ENCODE measurements at regions of chr11 and their contacts with region 1.

Region 1: GRCh38 chr11:60265373-60266214 is 14.9 kb upstream of the MS4A4A start:
- DNase-seq: peak; percentile 23
- CTCF ChIP-seq: peak; percentile 71

Region 2: GRCh38 chr11:60145677-60146076 is 119.9 kb before region 1 on chr11:
- in situ Hi-C with region 1: no loop called
- DNase-seq: no peak
- CTCF ChIP-seq: no peak

Region 3: DNA sequence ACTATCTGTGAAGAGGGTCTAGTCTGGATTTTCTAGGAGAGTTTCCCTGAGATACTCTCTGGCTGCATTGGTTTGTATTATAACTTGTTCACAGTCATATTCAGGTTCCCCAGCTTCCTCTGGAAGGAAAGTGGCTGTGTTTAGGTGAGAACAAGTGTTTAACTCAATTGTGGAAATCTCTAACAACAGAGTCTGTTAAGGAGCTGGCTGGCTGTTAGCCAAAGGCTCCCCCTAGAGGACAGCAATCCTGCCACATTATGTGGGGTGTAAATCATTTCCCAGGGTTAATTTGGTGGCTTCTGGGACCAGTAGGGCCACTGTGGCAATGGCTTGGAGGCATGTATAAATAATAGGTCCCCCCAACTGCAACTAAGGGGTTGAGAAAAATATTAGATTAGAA is 79.9 kb after region 1 on chr11:
- in situ Hi-C with region 1: loop called (anchors 10 kb)
- DNase-seq: no peak
- CTCF ChIP-seq: peak; percentile 75

Region 4: DNA sequence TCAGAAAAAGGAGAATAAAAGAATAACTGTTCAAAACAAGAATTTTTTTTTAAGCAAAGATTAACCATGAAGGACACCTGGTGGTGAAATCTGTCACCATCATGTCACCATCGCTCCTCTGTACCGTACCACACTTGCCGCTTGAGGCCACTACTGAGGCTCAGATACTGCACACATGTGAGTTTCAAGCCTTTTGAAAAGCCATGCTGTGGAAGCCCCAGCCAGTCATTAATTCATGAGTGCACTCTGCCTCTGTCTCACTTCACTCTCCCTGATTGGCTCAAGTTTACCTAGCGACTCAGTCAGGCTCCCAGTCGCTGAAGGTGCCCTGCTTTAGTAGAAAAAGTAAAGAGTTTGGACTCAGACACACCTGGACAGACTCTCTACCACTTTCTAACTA is 220.4 kb after region 1 on chr11:
- in situ Hi-C with region 1: loop called (anchors 10 kb)
- DNase-seq: peak; percentile 88
- CTCF ChIP-seq: peak; percentile 95

Region 5: GRCh38 chr11:60657888-60658287 is 392.3 kb after region 1 on chr11:
- in situ Hi-C with region 1: no loop called
- DNase-seq: no peak
- CTCF ChIP-seq: peak; percentile 32